Tibial artery (tissue), 4 donors: ENCODE measurements at regions of chr17 and their contacts with region 1.

Region 1: DNA sequence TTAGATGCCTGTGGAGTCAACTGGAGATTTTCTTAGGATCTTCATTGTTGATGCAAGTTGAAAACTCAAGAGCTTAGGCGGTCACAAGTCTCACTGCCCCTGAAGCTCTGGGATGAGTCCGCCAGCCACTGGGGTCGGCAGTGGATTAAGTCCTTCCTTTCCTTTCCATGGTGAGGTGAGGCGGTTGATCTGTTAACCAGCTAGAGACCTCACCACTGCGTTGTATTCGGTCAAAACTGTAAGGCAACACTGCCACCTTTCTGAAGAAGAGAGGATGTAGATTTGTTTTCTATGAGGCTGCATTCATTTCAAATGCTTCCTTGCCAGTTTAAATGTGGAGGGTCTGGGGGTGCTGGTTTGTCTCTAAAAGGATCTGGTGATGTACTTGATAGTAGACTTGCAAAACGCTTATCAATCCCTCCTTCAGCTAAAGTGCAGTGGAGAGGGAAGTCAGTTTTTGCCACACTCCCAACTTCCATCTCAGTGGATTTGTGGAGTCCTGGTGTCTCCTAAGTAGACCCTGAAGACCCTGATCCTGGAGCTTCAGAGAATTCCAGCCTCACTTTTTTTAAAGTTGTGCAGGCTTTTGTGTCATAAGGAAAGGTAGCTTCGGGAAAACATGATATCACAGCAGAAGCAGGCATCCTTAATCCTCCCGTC is 1.7 kb downstream of the MYOCD start:
- DNase-seq: no peak
- H3K4me3 ChIP-seq: peak overlapping the region; percentile 74 to 85
- H3K27ac ChIP-seq: peak overlapping the region; percentile 91 to 97
- H3K4me1 ChIP-seq: peaks cover 0 to 63% (median 16%) of the 10 kb centered on the region in 4 donors
- H3K27me3 ChIP-seq: no peaks in the 10 kb centered on the region
- CTCF ChIP-seq: peak; percentile 55 to 61

Region 2: DNA sequence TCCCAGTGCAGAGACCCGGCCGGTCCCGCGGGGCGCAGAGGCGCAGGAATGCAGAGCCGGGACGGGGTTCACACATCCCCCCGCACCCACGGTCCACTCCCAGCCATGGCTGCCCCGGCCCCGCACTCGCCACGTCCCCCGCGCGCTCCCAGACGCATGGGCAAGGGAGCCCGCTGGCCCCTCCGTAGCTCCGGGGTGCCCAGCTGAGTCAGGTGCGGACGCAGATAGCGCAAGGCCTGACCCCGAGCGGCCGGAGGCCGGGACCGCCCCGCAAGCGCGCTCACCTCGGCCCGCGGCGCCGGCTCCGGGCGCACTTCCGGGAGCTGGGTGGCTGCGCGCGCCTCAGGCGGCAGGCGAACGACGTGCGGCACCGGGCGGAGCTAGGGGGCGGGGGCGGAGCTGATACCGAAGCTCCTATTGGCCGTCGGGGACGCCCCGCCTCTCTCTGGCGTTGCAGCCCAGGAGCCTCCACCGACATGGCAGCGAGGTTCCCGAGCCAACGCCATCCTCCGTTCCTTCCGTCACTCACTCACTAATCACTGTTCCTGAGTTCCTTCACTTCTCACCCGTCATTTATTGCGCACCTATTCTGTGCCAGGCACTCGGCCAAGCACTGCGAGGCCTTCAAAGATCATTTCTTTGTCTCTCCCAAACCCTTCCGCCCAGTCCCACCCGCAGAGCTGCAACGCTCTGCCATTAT is 670.1 kb before region 1 on chr17 and contains the start of gene ZNF18:
- intact Hi-C with region 1: loop called (anchors 5 kb)
- DNase-seq: peak; percentile 94 to 98
- H3K4me3 ChIP-seq: peak within 1 kb of the TSS; percentile 68 to 79
- H3K27ac ChIP-seq: peak within 1 kb of the TSS; percentile 77 to 88
- H3K4me1 ChIP-seq: peaks cover 0 to 9% (median 4%) of the 10 kb centered on the region in 4 donors
- H3K27me3 ChIP-seq: no peaks in the 10 kb centered on the region
- CTCF ChIP-seq: peak in 1 of 2 experiments; percentile 21

Region 3: DNA sequence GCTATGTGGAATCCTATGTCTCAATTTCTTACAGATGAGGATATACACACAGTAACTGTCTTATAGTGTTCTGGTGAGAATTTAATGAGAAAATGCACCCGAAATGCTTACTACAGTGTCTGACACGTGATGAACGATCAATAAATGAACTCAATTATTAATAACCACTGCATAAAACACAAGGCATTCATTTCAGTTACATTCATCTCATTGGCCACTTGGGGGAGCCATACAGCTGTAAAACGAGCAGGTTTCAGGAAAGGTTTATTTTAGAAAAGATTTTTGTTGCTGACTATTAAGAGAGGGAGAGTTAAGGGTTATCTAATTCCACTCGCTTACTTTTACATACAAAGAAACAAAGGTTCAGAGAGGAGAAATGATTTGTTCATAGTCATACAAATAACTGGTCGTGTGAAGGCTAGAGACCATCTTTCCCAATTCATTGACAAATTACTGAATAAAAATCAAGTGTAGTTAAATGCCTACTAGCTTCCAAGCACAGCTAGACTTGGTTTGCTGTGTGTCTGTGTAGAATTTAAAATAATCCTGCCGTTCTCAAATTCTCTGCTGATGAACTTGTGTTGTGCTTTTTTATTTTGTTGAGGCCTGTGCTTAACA is 486.7 kb before region 1 on chr17:
- intact Hi-C with region 1: loop called (anchors 5 kb)
- DNase-seq: no peak
- H3K4me3 ChIP-seq: no peak overlapping the region
- H3K27ac ChIP-seq: no peak overlapping the region
- H3K4me1 ChIP-seq: peaks cover 0 to 4% (median 0%) of the 10 kb centered on the region in 4 donors
- H3K27me3 ChIP-seq: no peaks in the 10 kb centered on the region
- CTCF ChIP-seq: peak; percentile 80 to 87

Region 4: GRCh38 chr17:12230481-12231354 is 436.7 kb before region 1 on chr17:
- intact Hi-C with region 1: no loop called
- DNase-seq: no peak
- H3K4me3 ChIP-seq: no peak overlapping the region
- H3K27ac ChIP-seq: peak overlapping the region in 1 of 2 donors; percentile 27
- H3K4me1 ChIP-seq: peaks cover 0 to 43% (median 12%) of the 10 kb centered on the region in 4 donors
- H3K27me3 ChIP-seq: no peaks in the 10 kb centered on the region
- CTCF ChIP-seq: no peak

Region 5: DNA sequence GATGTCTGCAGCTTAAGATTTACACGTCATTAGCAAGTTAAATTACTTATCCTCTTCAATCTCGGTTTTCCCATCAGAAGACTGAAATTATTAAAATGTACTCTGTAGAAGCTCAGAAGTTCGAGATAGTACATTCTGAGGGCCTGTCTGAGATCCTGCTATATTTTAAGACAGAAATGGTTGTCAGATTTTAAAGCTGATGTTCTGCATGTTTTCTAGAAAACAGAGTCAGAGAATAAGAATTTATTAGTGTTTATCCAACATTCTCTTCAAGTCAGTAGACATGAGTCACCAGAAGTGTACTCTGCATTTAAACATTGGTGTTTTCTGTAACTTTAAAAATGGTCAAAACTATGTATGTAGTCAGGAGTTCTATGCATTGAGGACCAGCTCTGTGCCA is 156.9 kb before region 1 on chr17:
- intact Hi-C with region 1: no loop called
- DNase-seq: no peak
- H3K4me3 ChIP-seq: no peak overlapping the region
- H3K27ac ChIP-seq: peak overlapping the region in 1 of 2 donors; percentile 15
- H3K4me1 ChIP-seq: peaks cover 0 to 20% (median 0%) of the 10 kb centered on the region in 4 donors
- H3K27me3 ChIP-seq: no peaks in the 10 kb centered on the region
- CTCF ChIP-seq: no peak